ENCODE measurements at regions of chr7 and their contacts with region 1.

Region 1: GRCh38 chr7:7595451-7595850 is 28.8 kb downstream of the MIOS start:
- DNase-seq: peak; percentile 11
- H3K4me3 ChIP-seq: no peak overlapping the region
- H3K27ac ChIP-seq: no peak overlapping the region
- H3K4me1 ChIP-seq: no peaks in the 10 kb centered on the region
- H3K27me3 ChIP-seq: no peaks in the 10 kb centered on the region
- CTCF ChIP-seq: peak; percentile 10 to 35

Region 2: DNA sequence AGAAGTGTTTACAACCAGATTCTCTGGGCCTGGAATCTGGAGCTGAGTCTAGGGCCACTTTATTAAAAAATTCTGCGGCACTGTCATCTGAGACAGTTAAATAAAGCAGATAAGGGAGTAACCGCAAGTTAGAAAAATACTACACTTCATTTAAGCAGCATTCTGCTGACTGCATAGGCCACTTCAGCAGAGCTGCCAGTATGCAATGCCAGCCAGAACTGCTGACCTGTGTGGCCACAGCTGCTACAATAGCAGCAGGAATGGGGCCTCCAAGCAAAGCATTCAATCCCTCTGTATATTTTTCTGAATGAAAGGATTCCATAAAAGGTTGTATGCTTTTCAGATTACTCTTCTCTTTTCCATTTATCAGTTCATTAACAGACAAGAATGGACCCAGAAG is 195.7 kb before region 1 on chr7:
- CTCF ChIA-PET with region 1: no interaction called
- dilution Hi-C with region 1: no loop called
- in situ Hi-C with region 1: no loop called
- intact Hi-C with region 1: no loop called
- DNase-seq: no peak
- H3K4me3 ChIP-seq: no peak overlapping the region
- H3K27ac ChIP-seq: no peak overlapping the region
- H3K4me1 ChIP-seq: no peaks in the 10 kb centered on the region
- H3K27me3 ChIP-seq: no peaks in the 10 kb centered on the region
- CTCF ChIP-seq: no peak

Region 3: GRCh38 chr7:7640221-7641128 is 45.0 kb after region 1 on chr7 and contains the start of gene UMAD1:
- CTCF ChIA-PET with region 1: interaction called, 5 read pairs
- dilution Hi-C with region 1: no loop called
- in situ Hi-C with region 1: no loop called
- intact Hi-C with region 1: loop called (anchors 1 kb)
- DNase-seq: peak; percentile 100
- H3K4me3 ChIP-seq: peak within 1 kb of the TSS; percentile 83 to 97 (median 96)
- H3K27ac ChIP-seq: peak within 1 kb of the TSS; percentile 94
- H3K4me1 ChIP-seq: peaks cover 7% of the 10 kb centered on the region
- H3K27me3 ChIP-seq: no peaks in the 10 kb centered on the region
- CTCF ChIP-seq: no peak
- total RNA-seq, gene UMAD1: 12.0 to 12.7 TPM

Region 4: DNA sequence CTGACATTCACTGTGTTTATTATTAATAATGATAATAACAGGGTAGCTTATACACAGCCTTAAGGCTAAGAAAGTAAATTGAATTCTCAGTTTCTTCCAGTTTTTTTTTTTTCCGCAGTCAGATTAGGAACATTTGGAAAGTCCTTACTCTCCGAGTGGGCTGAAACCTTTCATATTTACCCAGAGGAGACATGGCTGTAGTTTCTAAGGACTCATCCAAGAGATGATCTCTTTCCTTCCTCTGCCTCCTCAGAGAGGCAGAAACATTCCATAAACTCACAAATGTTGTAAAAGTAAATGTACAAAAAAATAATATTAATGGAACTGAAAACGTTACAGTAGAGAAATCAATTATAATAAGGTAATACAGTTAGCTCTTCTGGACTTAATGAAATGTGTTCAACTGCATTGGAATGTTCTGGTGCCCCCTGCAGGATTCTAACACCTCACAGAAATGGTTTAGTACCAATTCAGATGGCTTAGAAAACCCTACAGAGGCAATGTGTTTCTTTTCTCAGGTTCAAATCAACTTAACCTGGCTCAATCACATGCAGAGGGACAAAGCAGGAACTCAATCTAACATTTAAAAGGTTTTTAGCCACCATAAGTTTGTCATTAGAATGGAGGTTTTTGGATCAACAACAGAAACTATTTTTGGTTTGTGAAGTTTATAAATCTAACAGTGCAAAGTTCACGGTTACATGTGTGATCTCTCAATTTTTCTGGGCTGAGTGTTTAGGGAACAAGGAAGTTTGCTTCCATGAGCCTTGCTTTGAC is 594.9 kb after region 1 on chr7:
- CTCF ChIA-PET with region 1: no interaction called
- dilution Hi-C with region 1: no loop called
- in situ Hi-C with region 1: no loop called
- intact Hi-C with region 1: loop called (anchors 1 kb)
- DNase-seq: peak; percentile 41
- H3K4me3 ChIP-seq: no peak overlapping the region
- H3K27ac ChIP-seq: no peak overlapping the region
- H3K4me1 ChIP-seq: no peaks in the 10 kb centered on the region
- H3K27me3 ChIP-seq: no peaks in the 10 kb centered on the region
- CTCF ChIP-seq: peak; percentile 67 to 75

Region 5: GRCh38 chr7:8201846-8202441 is 606.5 kb after region 1 on chr7:
- CTCF ChIA-PET with region 1: no interaction called
- dilution Hi-C with region 1: no loop called
- in situ Hi-C with region 1: loop called in 1 of 2 experiments (anchors 10 kb)
- intact Hi-C with region 1: no loop called
- DNase-seq: peak; percentile 32
- H3K4me3 ChIP-seq: no peak overlapping the region
- H3K27ac ChIP-seq: no peak overlapping the region
- H3K4me1 ChIP-seq: peaks cover 10% of the 10 kb centered on the region
- H3K27me3 ChIP-seq: no peaks in the 10 kb centered on the region
- CTCF ChIP-seq: no peak